Breast epithelium (tissue), 4 donors: ENCODE measurements at regions of chr11 and their contacts with region 1.

Region 1: DNA sequence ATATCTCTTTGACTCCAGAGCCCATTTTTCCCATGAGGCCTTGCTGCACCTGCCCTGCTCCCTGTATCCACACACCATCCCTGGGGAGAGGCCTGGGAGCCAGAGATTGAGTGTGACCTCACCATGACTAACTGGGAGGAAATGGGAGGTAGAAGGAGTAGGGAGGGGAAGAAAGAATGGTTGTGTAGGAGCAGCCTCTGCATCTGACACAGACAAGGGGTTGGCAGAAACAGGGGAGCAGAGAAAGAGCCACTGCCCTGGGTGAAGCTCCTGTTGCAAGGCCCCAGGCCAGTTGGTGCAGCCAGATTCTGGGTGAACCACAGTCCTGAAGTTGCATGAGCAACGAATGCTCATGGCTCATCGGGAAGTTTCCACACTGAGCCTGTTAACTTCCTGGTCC is 32.4 kb downstream of the POU2F3 start:
- DNase-seq: no peak
- H3K4me3 ChIP-seq: no peak overlapping the region
- H3K27ac ChIP-seq: no peak overlapping the region
- H3K4me1 ChIP-seq: no peaks in the 10 kb centered on the region
- H3K27me3 ChIP-seq: no peaks in the 10 kb centered on the region
- CTCF ChIP-seq: no peak
- POLR2A ChIP-seq: no peak

Region 2: GRCh38 chr11:119759324-119759723 is 513.0 kb before region 1 on chr11:
- intact Hi-C with region 1: no loop called
- DNase-seq: no peak
- H3K4me3 ChIP-seq: no peak overlapping the region
- H3K27ac ChIP-seq: no peak overlapping the region
- H3K4me1 ChIP-seq: no peaks in the 10 kb centered on the region
- H3K27me3 ChIP-seq: peaks cover 0 to 6% of the 10 kb centered on the region in 2 donors
- CTCF ChIP-seq: no peak
- POLR2A ChIP-seq: no peak

Region 3: DNA sequence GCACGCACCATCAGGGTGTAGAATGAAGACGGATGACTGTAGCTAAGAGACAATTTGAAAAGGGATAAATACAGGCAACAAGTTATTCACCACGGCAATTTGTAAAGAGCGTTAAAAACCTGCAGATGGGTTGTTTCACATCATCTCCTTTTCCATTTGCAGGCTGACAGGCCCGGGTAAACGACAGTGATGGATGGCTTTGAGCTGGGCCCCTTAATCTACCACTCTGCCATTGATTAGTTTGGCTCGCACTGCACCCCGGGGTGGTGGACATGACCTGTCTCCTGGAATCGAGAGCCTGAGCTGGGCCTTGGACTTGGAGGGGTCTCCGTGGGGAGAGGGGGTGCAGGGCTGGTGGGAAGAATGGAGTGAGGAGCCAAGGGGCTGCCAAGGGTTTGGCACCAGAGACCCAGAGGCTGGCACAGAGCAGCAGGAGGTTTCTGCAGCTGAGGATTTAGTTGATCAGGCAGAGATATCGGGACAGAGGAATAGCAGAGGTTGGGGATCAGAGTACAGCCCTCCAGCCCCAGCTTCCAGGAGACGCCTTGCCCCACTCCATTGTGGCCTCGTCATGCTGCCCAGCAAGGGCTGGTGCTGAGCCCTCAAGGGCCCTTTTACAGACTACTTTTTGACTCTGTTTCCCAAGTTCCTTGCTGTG is 432.7 kb before region 1 on chr11:
- intact Hi-C with region 1: no loop called
- DNase-seq: no peak
- H3K4me3 ChIP-seq: no peak overlapping the region
- H3K27ac ChIP-seq: no peak overlapping the region
- H3K4me1 ChIP-seq: no peaks in the 10 kb centered on the region
- H3K27me3 ChIP-seq: no peaks in the 10 kb centered on the region
- CTCF ChIP-seq: no peak
- POLR2A ChIP-seq: no peak

Region 4: DNA sequence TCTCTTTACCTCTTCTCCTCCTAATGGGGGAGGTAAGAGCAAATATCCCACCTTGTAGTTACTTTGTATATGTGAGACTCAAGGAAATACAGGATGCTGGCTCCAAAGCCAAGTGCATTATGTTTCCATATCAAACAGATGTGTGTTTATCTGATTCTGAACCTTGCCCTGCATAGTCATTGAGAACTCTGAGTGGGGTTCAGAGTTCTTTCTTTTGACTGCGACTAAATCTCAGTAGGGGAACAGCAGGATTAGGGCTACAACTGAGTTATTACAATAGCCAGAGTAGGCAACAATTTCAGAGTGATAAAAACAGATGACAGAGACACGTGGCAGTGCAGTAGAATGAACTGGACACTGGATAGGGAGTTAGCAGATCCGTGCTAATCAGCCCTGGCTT is 18.7 kb after region 1 on chr11:
- intact Hi-C with region 1: loop called (anchors 2 kb)
- DNase-seq: no peak
- H3K4me3 ChIP-seq: no peak overlapping the region
- H3K27ac ChIP-seq: no peak overlapping the region
- H3K4me1 ChIP-seq: no peaks in the 10 kb centered on the region
- H3K27me3 ChIP-seq: no peaks in the 10 kb centered on the region
- CTCF ChIP-seq: no peak
- POLR2A ChIP-seq: no peak

Region 5: DNA sequence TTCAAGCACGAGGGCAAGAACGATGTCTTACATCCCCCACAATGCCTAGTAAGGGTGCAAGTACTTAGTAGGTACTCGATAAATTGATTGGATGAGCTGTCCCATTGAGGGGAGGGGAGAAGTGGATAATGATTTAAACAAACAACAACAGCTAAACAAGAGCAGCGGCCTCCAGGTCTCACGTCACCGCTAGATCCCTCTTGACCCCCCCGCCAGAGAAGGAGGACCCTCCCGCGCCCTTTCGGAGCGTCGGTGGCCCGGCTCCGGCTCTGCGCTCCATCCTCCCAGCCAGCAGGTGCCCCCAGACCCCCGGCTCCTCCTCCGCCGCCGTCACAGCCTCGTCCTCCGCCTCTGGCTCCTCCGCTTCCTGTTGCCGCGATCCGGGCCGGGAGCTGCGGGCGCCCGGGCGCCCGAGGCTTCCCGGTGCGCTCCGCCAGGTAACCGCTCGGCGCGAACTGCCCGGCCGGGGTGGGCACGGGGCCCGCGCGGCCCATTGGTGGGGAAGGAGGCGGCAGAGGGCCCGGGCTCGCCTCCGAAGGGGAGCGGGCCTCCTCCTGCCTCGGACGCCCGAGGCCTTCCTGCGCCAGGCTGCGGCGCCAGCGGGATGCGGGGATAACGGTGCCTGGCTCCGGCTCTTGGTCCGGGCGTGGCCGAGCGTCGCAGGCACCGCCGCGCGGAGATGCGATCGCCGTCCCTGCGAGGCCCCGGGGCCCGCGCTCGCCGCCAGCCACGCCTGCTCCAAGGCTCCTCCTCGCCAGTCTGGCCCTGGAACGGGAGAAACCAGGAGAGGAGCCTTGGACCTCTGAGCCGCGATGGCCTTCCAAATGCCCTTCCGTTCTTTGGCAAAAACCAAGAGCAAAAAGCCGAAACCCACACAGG is 52.9 kb after region 1 on chr11 and contains the start of gene TLCD5:
- intact Hi-C with region 1: no loop called
- DNase-seq: peak in 1 of 2 donors; percentile 72
- H3K4me3 ChIP-seq: peak within 1 kb of the TSS; percentile 70 to 97 (median 79)
- H3K27ac ChIP-seq: peak within 1 kb of the TSS; percentile 96 to 99
- H3K4me1 ChIP-seq: no peaks in the 10 kb centered on the region
- H3K27me3 ChIP-seq: no peaks in the 10 kb centered on the region
- CTCF ChIP-seq: peak in 1 of 3 donors; percentile 16
- POLR2A ChIP-seq: no peak
- total RNA-seq, gene TLCD5: 2.9 to 8.2 (median 6.9) TPM

Region 6: DNA sequence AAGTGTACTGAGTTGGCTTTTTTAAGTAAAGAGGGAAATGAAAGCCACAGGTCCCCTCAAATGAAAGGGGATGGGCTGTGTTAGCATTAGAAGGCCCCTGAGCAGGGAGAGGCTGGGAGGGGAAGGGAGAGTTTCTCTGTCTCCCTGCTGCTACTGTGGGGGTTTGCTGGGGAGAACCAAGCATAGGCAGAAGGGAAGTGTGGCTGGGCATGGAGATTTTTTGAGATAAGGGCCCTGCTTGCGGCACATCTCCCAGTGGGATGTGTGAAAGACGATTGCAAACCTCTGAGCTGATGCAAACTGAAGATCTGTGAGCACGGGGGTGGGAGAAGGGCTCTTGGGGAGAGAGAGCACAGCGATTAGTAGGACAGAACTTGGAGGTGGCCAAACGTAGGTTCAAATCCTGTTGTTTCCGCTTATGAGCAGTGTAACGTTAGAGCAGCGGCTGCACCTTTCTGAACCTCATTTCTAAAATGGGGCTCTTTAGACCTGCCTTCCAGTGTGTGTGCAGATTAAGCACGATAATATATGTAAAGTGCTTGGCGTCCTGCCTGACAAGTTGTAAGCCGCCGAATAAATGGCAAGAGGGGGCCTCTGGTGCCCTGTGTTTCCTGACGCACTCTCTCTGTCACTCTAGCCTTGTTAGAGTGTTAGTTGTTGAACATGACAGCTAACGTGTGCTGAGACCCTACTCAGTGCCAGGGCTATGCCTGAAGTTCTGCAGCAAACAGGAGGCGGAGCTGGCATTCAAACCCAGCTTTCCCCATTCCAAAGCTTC is 361.5 kb after region 1 on chr11:
- intact Hi-C with region 1: no loop called
- DNase-seq: no peak
- H3K4me3 ChIP-seq: no peak overlapping the region
- H3K27ac ChIP-seq: no peak overlapping the region
- H3K4me1 ChIP-seq: no peaks in the 10 kb centered on the region
- H3K27me3 ChIP-seq: no peaks in the 10 kb centered on the region
- CTCF ChIP-seq: no peak
- POLR2A ChIP-seq: no peak